ENCODE measurements at regions of chr18 and their contacts with region 1.

Region 1: GRCh38 chr18:11937874-11938478 is 29.9 kb upstream of the MPPE1 start:
- DNase-seq: peak; percentile 72 to 73
- ATAC-seq: peak; percentile 42 to 84 (median 76)
- H3K4me3 ChIP-seq: no peak overlapping the region
- H3K27ac ChIP-seq: no peak overlapping the region
- H3K4me1 ChIP-seq: peaks cover 0 to 9% (median 0%) of the 10 kb centered on the region in 9 donors
- H3K27me3 ChIP-seq: no peaks in the 10 kb centered on the region
- CTCF ChIP-seq: peak; percentile 70 to 90 (median 85)

Region 2: DNA sequence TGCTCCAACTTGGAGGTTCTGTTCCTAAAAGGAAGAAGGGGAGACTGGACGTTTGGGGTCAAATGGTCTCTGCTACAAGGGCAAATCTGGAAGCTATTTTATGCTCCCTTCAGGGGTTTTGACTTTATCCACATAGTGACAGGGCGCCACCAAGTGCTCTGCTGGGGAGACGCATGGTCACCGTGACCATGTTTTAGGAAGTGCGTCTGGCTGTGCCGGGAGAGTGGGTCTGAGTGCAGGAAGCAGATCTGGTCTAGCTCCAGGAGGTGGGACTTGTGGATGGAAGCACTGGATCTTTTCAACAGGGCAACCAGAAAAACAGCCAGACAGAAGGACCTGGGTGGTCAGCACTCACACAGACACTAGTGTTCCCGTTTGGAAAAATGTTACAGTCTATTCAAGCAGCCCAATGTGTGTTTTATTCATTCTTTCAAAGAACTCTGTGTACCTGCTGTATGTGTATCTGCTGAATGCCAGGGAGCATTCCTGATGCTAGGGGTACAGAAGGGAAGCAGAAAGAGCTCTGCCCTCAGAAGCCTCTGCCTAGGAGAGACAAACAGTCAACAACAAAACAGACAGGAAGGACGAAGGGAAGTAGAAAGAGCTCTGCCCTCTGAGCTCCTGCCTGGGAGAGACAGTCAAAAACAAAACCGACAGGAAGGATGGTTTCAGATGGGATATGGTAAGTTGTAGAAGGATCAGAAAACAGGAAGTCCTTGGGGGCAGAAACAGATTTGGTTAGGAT is 57.6 kb after region 1 on chr18:
- intact Hi-C with region 1: loop called (anchors 1 to 5 kb)
- DNase-seq: peak; percentile 76 to 80
- ATAC-seq: peak; percentile 79 to 93 (median 88)
- H3K4me3 ChIP-seq: peak overlapping the region in 2 of 10 donors; percentile 5 to 7
- H3K27ac ChIP-seq: peak overlapping the region in 9 of 10 donors; percentile 20 to 77 (median 65)
- H3K4me1 ChIP-seq: peaks cover 6 to 56% (median 28%) of the 10 kb centered on the region in 9 donors
- H3K27me3 ChIP-seq: no peaks in the 10 kb centered on the region
- CTCF ChIP-seq: peak; percentile 67 to 90 (median 85)

Measured in heart right ventricle (tissue), 16 donors.